Mammary epithelial cell (primary cell): ENCODE measurements at regions of chr7 and their contacts with region 1.

Region 1: DNA sequence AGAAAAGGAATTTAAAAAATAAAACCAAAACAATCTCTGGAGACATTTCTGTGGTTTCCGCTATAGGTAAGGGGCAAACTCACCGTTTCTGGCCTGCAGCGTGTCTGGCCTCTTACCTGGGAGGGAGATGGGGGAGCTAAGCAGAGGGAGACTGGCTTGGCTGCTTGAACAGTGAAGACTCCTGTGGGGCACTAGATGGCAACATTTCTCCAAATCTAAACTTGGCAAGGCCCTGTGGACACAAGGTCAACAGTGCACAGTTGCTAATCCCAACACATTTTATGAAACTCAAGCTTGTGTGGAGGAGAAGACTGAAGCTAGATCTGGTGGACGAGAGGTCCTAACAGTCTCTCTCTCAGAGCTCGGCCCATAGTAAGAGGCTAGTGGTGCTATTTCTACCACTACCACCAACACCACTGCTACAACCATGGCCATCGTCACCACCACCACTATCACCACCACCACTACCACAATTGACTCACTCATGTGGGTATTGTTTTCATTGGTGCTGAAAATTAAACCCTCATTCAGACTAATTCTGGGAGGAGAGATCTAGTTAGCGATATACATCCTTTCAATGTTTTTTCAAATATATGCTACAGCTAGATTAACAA is 28.4 kb upstream of the CDHR3 start:
- DNase-seq: peak; percentile 12
- H3K4me3 ChIP-seq: no peak overlapping the region
- H3K27ac ChIP-seq: no peak overlapping the region
- H3K4me1 ChIP-seq: peaks cover 14% of the 10 kb centered on the region
- H3K27me3 ChIP-seq: no peaks in the 10 kb centered on the region
- CTCF ChIP-seq: peak in 1 of 2 donors; percentile 30

Region 2: GRCh38 chr7:105279688-105280007 is 655.0 kb before region 1 on chr7:
- CTCF ChIA-PET with region 1: no interaction called
- dilution Hi-C with region 1: no loop called
- in situ Hi-C with region 1: no loop called
- intact Hi-C with region 1: no loop called
- DNase-seq: no peak
- H3K4me3 ChIP-seq: no peak overlapping the region
- H3K27ac ChIP-seq: no peak overlapping the region
- H3K4me1 ChIP-seq: peaks cover 20% of the 10 kb centered on the region
- H3K27me3 ChIP-seq: no peaks in the 10 kb centered on the region
- CTCF ChIP-seq: no peak

Region 3: GRCh38 chr7:105521027-105521532 is 413.6 kb before region 1 on chr7:
- CTCF ChIA-PET with region 1: no interaction called
- dilution Hi-C with region 1: no loop called
- in situ Hi-C with region 1: no loop called
- intact Hi-C with region 1: no loop called
- DNase-seq: peak; percentile 56
- H3K4me3 ChIP-seq: peak overlapping the region; percentile 74 to 91 (median 90)
- H3K27ac ChIP-seq: peak overlapping the region; percentile 75
- H3K4me1 ChIP-seq: no peaks in the 10 kb centered on the region
- H3K27me3 ChIP-seq: no peaks in the 10 kb centered on the region
- CTCF ChIP-seq: no peak

Region 4: GRCh38 chr7:105974471-105974870 is 39.8 kb after region 1 on chr7:
- CTCF ChIA-PET with region 1: no interaction called
- dilution Hi-C with region 1: loop called (anchors 5 kb)
- in situ Hi-C with region 1: no loop called
- intact Hi-C with region 1: no loop called
- DNase-seq: no peak
- H3K4me3 ChIP-seq: no peak overlapping the region
- H3K27ac ChIP-seq: no peak overlapping the region
- H3K4me1 ChIP-seq: no peaks in the 10 kb centered on the region
- H3K27me3 ChIP-seq: peaks cover 5% of the 10 kb centered on the region
- CTCF ChIP-seq: no peak

Region 5: GRCh38 chr7:106001886-106002285 is 67.2 kb after region 1 on chr7:
- CTCF ChIA-PET with region 1: no interaction called
- dilution Hi-C with region 1: no loop called
- in situ Hi-C with region 1: no loop called
- intact Hi-C with region 1: no loop called
- DNase-seq: no peak
- H3K4me3 ChIP-seq: no peak overlapping the region
- H3K27ac ChIP-seq: no peak overlapping the region
- H3K4me1 ChIP-seq: no peaks in the 10 kb centered on the region
- H3K27me3 ChIP-seq: no peaks in the 10 kb centered on the region
- CTCF ChIP-seq: no peak